A549 (cell line): ENCODE measurements at regions of chr17 and their contacts with region 1.

Region 1: GRCh38 chr17:64773836-64774761 is 112.0 kb upstream of the SMURF2 start:
- DNase-seq: peak; percentile 85 to 95
- ATAC-seq: peak; percentile 85 to 92
- H3K4me3 ChIP-seq: peak overlapping the region; percentile 38
- H3K27ac ChIP-seq: peak overlapping the region; percentile 65 to 81
- H3K4me1 ChIP-seq: peaks cover 24% of the 10 kb centered on the region
- CTCF ChIP-seq: peak; percentile 73
- EP300 ChIP-seq: no peak
- POLR2A ChIP-seq: no peak
- RAD21 ChIP-seq: peak; percentile 60 to 79

Region 2: GRCh38 chr17:64736804-64737492 is 37.2 kb before region 1 on chr17:
- CTCF ChIA-PET with region 1: interaction called, 22 read pairs
- POLR2A ChIA-PET with region 1: no interaction called
- DNase-seq: peak in 1 of 2 experiments; percentile 83
- ATAC-seq: peak; percentile 78 to 80
- H3K4me3 ChIP-seq: no peak overlapping the region
- H3K27ac ChIP-seq: no peak overlapping the region
- H3K4me1 ChIP-seq: peaks cover 28% of the 10 kb centered on the region
- CTCF ChIP-seq: peak; percentile 96
- EP300 ChIP-seq: no peak
- POLR2A ChIP-seq: no peak
- RAD21 ChIP-seq: peak; percentile 92 to 96

Region 3: DNA sequence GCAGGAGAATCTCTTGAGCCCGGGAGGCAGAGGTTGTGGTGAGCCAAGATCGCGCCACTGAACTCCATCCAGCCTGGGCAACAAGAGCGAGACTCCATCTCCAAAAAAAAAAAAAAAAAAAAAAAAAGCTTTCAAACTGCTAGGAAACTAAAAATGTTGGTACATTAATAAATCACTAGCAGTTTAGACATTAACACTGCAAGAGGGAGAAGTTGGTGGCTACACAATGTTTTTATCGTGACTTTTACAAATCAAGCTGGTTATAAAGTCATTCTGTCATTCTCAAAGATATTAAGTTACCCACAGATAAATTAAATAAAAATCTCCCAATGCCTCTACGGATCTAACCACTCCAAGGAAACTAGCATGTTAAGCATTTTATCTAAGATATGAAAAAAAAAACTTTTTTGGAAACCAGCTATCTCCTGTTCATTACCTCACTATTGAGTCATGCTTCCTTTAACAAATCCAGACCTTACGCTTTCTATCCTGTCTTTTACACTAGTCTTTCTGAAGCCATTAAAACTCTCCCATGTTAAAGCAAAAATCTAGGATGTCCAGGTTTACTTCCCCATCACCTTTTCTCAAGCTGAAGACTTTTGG is 26.1 kb before region 1 on chr17:
- CTCF ChIA-PET with region 1: interaction called, 49 read pairs
- POLR2A ChIA-PET with region 1: no interaction called
- DNase-seq: no peak
- ATAC-seq: no peak
- H3K4me3 ChIP-seq: no peak overlapping the region
- H3K27ac ChIP-seq: no peak overlapping the region
- H3K4me1 ChIP-seq: 0 out of 3 replicates have a peak, but pooled peaks cover 5% of the 10 kb centered on the region
- CTCF ChIP-seq: no peak
- EP300 ChIP-seq: no peak
- POLR2A ChIP-seq: no peak
- RAD21 ChIP-seq: no peak

Region 4: GRCh38 chr17:64786337-64786736 is 12.2 kb after region 1 on chr17:
- CTCF ChIA-PET with region 1: interaction called, 43 read pairs
- POLR2A ChIA-PET with region 1: no interaction called
- DNase-seq: no peak
- ATAC-seq: no peak; a peak in 1 of 6 replicates
- H3K4me3 ChIP-seq: no peak overlapping the region
- H3K27ac ChIP-seq: no peak overlapping the region
- H3K4me1 ChIP-seq: peaks cover 5% of the 10 kb centered on the region; the same call in 1 of the 3 replicates
- CTCF ChIP-seq: no peak
- EP300 ChIP-seq: no peak
- POLR2A ChIP-seq: no peak
- RAD21 ChIP-seq: no peak